Activated CD4-positive, alpha-beta T cell treated with anti-CD3 and anti-CD28 coated beads, Interleukin-2, amount 10 ng/mL, durations not matched to agents 7 days and 5 days (primary cell): ENCODE measurements at regions of chr10 and their contacts with region 1.

Region 1: DNA sequence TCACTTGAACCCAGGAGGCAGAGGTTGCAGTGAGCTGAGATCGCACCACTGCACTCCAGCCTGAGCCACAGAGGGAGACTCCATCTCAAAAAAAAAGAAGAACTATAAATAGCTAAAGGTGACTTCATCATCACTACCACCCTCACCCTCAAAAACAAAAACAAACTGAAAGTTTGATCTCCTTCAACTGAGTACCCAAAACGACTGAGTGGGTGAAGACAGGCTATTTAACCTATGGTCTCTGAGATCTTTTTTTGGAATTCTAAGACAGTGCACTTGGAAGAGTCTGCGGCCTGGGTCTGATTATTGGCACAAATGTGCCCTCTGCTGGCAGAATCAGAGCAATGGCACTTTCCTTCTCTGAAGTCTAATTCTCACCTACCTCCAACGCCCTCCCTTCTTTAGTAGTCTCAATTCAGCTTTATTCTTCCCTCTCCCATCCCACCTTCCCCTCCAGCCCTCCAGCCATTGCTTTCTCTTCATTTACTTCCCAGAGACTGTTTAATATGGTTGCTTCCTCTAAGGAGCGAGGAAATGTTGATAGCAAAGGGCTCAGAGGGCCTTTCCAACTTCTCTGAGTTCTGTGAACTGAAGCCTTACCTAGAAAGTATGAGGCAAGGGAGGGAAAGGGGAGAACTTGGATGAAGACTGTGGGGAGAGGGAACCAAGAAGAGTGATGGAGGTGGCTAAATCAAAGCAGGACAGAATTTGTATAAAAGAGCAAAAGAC is 2.9 kb upstream of the MYOZ1 start:
- DNase-seq: peak; percentile 63
- H3K4me3 Mint-ChIP-seq: no peak overlapping the region
- H3K27ac Mint-ChIP-seq: no peak overlapping the region
- H3K4me1 Mint-ChIP-seq: peaks cover 22% of the 10 kb centered on the region
- H3K27me3 Mint-ChIP-seq: peaks cover 5% of the 10 kb centered on the region

Region 2: GRCh38 chr10:73529089-73529832 is 114.9 kb before region 1 on chr10:
- CTCF ChIA-PET with region 1: interaction called, 28 read pairs
- POLR2A ChIA-PET with region 1: no interaction called
- DNase-seq: peak; percentile 80
- H3K4me3 Mint-ChIP-seq: no peak overlapping the region
- H3K27ac Mint-ChIP-seq: no peak overlapping the region
- H3K4me1 Mint-ChIP-seq: no peaks in the 10 kb centered on the region
- H3K27me3 Mint-ChIP-seq: no peaks in the 10 kb centered on the region

Region 3: DNA sequence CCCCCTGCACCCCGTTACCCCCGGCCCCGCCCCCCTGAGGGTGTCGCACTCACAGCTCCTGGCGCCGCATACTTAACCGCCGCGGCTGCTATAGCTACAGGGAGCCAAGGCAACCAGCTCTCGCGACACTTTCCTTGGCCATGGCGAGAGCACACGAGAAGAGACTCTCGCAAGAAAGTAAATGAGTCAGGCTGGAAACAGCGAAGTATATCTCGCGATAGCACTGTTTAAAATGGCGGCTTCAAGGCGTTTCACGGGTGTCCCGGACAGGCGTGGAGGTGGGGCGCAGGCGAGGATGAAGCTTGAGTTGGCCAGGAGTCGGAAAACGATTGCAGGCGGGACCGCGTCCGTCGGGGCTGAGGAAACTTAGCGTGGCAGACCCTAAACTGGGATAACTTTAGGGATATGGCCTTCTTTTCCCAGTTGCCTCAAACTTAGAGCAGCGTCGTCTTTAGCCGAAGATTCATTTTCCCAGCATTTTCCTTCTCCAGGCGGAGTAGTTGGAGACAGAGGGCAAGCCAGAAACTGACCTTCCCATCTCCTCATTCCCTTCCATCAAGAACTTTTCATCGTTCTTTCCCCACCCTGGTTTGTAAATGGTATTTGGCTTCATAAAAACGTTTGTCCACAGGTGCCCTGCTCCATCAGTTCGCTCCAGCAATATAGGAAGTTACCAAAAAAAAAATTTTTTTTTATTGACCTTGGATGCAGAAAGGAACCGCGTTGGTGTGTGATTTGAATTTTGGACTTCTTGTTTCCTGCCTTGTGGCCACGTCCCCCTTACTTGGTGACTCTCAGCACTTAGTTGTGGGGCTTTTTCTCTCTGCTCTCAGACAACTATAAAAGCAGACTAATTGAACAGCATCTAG is 18.1 kb before region 1 on chr10:
- CTCF ChIA-PET with region 1: interaction called, 13 read pairs
- POLR2A ChIA-PET with region 1: no interaction called
- DNase-seq: peak; percentile 97
- H3K4me3 Mint-ChIP-seq: peak overlapping the region; percentile 94
- H3K27ac Mint-ChIP-seq: peak overlapping the region; percentile 96
- H3K4me1 Mint-ChIP-seq: peaks cover 20% of the 10 kb centered on the region
- H3K27me3 Mint-ChIP-seq: no peaks in the 10 kb centered on the region